Cardiac septum (tissue), 1 donor: ENCODE measurements at regions of chr6 and their contacts with region 1.

Region 1: DNA sequence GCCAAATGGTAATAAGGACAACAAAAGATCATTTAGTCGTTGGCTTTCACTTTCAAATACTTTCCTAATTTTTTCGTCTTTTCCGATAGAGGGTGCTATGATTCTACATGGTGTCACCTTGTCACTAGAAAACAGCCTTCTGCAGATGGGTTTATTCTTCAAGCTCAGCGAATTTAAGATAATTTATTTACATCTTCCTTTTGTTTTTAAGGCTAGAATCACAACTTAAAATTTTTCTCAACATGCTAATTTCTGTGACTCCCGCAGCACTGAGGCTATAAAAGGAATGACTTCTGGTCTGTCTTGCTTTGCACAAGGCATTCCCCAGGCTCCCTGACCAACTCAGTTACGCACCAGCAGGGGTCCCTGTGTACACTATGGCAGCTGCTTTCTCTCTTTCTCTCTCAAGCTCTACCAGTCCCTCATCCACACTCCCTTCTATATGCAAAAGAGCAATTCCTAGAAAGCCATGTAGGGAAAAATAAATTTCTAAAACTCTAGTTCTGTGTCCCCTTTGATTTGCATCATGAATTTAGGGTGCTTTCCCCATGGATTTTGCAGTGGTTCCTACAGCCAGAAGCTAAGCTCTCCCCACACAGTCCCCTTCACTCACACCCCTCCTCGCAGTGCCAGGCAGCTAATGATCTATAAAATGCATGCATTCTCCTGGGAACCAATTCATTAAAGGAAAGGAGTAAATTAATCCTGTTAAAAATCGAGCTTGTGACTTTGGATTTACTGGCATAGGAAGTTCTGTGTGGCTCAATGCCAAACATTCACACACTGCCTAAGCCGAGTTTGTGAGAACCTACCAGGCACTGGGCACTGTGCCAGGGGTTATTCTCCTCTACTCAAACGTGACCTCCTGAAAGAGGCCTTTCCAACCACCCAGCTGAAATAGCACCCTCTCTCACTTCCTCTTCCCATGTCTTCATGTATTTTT is 74.5 kb downstream of the DCDC2 start:
- DNase-seq: no peak

Region 2: DNA sequence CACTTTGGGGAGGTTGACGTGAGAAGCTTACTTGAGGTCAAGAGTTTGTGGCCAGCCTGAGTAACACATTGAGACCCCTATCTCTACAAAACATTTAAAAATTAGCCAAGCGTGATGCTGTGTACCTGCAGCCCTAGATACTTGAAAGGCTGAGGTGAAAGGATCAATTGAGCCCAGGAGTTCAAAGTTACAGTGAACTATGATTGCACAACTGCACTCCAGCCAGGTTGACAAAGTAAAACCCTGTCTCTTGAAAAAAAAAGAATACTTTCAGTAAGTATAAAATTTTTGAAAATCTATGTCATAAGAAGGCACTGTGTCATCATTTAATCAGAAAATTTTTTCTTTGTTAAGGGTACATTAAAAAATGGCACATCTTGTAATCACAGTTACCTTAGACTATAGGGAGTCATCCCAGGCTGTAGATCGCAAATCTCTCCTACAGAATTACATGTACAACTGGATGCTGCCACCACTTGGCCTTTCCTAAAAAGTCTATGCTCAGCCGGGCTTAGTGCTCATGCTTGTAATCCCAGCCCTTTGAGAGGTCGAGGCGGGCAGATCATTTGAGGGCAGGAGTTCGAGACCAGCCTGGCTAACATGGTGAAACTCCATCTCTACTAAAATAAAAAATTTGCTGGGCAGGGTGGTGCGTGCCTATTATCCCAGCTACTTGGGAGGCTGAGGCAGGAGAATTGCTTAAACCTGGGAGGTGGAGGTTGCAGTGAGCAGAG is 102.4 kb after region 1 on chr6:
- intact Hi-C with region 1: loop called (anchors 5 kb)
- DNase-seq: no peak